ENCODE measurements at regions of chr4 and their contacts with region 1.

Region 1: DNA sequence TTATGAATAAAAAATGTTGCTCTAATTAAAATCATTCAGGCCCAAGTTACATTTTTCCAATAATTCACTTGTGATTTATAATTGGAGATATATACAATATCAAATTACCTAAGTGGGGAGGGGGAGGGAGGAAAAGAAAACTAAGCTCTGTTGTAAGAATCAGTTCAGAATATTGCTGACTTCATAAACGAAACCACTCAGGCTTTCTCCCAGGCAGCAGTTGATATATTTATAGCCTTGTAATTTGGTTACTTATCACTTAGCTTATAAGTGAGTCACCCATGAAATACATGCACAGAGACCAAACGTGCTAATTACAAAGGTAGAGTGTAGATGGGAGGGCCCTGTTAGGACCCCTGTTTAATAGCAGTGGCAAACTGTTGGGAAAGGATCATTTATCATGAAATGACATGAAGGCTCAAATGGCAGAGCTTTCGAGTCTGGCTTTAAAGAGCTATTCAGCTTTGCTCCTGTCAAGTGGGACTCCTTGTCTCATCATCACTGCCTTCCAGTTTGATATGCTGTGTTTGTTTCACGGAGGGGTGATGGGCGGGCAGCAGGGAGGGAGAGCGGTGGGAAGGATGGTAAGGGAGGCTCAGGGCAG is 105.6 kb upstream of the PGRMC2 start:
- DNase-seq: no peak
- ATAC-seq: no peak
- H3K4me3 ChIP-seq: no peak overlapping the region
- H3K27ac ChIP-seq: peak overlapping the region; percentile 23; the same call in 1 of the 2 replicates
- H3K4me1 ChIP-seq: peaks cover 2% of the 10 kb centered on the region
- H3K27me3 ChIP-seq: no peaks in the 10 kb centered on the region
- CTCF ChIP-seq: no peak

Region 2: DNA sequence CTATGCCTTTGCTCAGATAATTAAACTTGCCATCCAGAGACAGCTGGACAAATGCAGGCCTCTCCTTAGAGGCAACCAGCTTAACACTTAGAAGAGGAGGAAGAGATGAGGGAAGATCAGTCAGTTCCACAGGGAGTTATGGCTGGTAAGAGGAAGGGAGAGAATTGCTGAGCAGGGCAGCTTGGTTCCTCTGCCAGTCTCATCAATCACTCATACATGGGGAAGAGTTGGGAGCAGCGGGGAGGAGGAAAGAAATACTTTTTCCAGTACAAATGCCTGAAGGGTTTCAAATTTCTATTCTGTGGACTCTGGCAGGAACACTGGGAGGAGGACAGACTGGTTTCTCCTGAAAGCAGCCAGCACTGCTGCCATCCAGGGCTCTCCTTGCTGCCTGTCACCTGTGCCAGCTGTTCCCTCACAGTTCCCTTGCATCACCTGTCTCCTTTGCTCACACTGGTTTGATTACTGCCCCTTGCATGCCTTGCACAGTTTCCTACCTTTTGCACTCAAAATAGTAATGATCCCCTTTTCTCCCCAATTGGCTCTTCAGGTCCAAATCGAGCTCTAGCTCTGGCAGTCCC is 165.1 kb before region 1 on chr4:
- CTCF ChIA-PET with region 1: no interaction called
- POLR2A ChIA-PET with region 1: no interaction called
- in situ Hi-C with region 1: no loop called
- intact Hi-C with region 1: no loop called
- DNase-seq: no peak
- ATAC-seq: no peak
- H3K4me3 ChIP-seq: no peak overlapping the region
- H3K27ac ChIP-seq: no peak overlapping the region
- H3K4me1 ChIP-seq: no peaks in the 10 kb centered on the region
- H3K27me3 ChIP-seq: no peaks in the 10 kb centered on the region
- CTCF ChIP-seq: no peak

Region 3: DNA sequence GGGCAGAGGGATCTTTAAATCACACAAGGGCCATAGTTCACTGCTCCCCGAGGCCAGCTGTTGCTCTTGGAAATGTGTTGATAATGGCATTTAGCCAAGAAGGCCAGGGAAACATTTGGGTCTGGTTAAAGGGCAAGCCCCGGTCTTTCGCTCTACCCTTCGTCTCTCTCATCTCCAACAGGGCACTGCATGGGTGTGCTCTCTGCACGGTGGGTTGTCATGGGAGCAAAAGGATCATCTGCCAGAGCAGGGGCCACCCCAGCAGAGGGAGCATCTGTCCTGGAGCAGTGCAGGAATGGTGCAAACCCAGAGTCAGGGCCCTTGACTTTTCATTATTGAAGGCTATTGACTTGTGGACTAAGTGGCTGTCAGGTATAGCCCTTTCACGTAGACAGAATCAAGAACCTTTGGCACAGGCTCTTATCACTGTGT is 82.9 kb before region 1 on chr4:
- CTCF ChIA-PET with region 1: no interaction called
- POLR2A ChIA-PET with region 1: no interaction called
- in situ Hi-C with region 1: no loop called
- intact Hi-C with region 1: no loop called
- DNase-seq: no peak
- ATAC-seq: no peak; the same call in 1 of the 2 replicates
- H3K4me3 ChIP-seq: no peak overlapping the region
- H3K27ac ChIP-seq: no peak overlapping the region
- H3K4me1 ChIP-seq: no peaks in the 10 kb centered on the region
- H3K27me3 ChIP-seq: no peaks in the 10 kb centered on the region
- CTCF ChIP-seq: peak; percentile 11; the same call in 1 of the 2 replicates

Region 4: GRCh38 chr4:128862608-128863311 is 469.6 kb after region 1 on chr4:
- CTCF ChIA-PET with region 1: interaction called, 10 read pairs
- POLR2A ChIA-PET with region 1: no interaction called
- in situ Hi-C with region 1: no loop called
- intact Hi-C with region 1: no loop called
- DNase-seq: no peak
- ATAC-seq: peak; percentile 63
- H3K4me3 ChIP-seq: no peak overlapping the region
- H3K27ac ChIP-seq: peak overlapping the region; percentile 49; the same call in 1 of the 2 replicates
- H3K4me1 ChIP-seq: no peaks in the 10 kb centered on the region
- H3K27me3 ChIP-seq: no peaks in the 10 kb centered on the region
- CTCF ChIP-seq: no peak

Measured in Panc1 (cell line).